Activated CD4-positive, alpha-beta memory T cell treated with anti-CD3 and anti-CD28 coated beads for 36 hours (primary cell): ENCODE measurements at regions of chr11 and their contacts with region 1.

Region 1: GRCh38 chr11:130894322-130895025 is 21.8 kb downstream of the SNX19 start:
- DNase-seq: peak; percentile 80
- H3K4me3 Mint-ChIP-seq: no peak overlapping the region
- H3K27ac Mint-ChIP-seq: no peak overlapping the region
- H3K4me1 Mint-ChIP-seq: no peaks in the 10 kb centered on the region
- H3K27me3 Mint-ChIP-seq: no peaks in the 10 kb centered on the region

Region 2: GRCh38 chr11:130871616-130872015 is 22.9 kb before region 1 on chr11:
- CTCF ChIA-PET with region 1: interaction called, 10 read pairs
- POLR2A ChIA-PET with region 1: no interaction called
- intact Hi-C with region 1: no loop called
- DNase-seq: no peak
- H3K4me3 Mint-ChIP-seq: no peak overlapping the region
- H3K27ac Mint-ChIP-seq: no peak overlapping the region
- H3K4me1 Mint-ChIP-seq: peaks cover 9% of the 10 kb centered on the region
- H3K27me3 Mint-ChIP-seq: no peaks in the 10 kb centered on the region

Region 3: DNA sequence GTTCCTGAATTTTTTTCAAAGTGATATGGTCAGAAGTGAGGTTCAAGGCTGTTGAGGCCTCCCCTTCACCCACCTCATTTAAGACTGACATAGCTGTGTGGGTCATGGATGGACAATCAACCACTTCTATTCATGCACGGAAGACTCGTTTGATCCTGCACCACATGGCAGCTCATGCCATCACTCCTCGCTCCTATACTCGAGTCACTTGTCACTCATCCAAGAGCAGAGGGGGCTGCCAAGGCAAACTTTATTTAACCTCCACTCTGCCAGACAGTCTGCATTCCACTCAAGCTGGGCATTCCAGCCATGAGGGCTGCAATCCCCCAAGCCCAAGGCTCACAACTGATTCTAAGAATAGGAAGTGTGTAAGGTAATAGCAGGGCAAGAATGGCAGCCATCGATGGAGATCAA is 12.3 kb before region 1 on chr11:
- CTCF ChIA-PET with region 1: interaction called, 20 read pairs
- POLR2A ChIA-PET with region 1: no interaction called
- intact Hi-C with region 1: loop called (anchors 1 kb)
- DNase-seq: no peak
- H3K4me3 Mint-ChIP-seq: no peak overlapping the region
- H3K27ac Mint-ChIP-seq: no peak overlapping the region
- H3K4me1 Mint-ChIP-seq: peaks cover 17% of the 10 kb centered on the region
- H3K27me3 Mint-ChIP-seq: no peaks in the 10 kb centered on the region

Region 4: DNA sequence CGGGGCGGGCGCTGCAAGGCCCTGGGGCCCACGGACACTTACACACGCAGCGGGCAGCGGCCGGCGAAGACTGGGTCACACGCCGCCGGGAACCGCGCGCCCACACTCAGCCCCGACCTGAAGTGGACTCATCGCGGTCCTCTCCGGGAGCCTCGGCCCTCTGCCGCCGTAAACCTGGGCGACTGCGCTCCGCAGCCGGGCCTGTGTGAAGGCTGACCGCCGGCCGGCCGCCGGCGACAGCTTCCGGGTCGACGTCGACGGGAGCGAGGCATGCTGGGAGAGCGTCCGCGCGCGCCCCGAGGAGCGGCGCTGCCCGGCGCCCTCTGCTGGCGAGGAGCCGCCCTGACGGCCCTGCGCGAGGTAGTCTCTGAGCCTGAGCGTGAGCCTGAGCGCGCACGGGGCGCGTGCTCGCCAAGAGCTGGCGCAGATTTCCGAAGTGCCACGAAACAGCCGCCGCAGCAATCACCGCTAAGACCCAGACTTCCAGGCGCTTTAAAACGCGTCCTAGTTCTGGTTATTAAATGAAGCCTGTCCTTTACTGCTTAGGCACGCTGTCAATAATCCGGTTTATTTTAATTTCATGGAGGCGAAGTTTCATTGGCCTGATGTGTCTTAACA is 21.9 kb after region 1 on chr11 and contains the start of gene SNX19:
- CTCF ChIA-PET with region 1: interaction called, 14 read pairs
- POLR2A ChIA-PET with region 1: no interaction called
- intact Hi-C with region 1: no loop called
- DNase-seq: peak; percentile 94
- H3K4me3 Mint-ChIP-seq: peak within 1 kb of the TSS; percentile 79
- H3K27ac Mint-ChIP-seq: peak within 1 kb of the TSS; percentile 58
- H3K4me1 Mint-ChIP-seq: peaks cover 34% of the 10 kb centered on the region
- H3K27me3 Mint-ChIP-seq: peaks cover 7% of the 10 kb centered on the region
- total RNA-seq, gene SNX19: 26.0 to 27.0 TPM